ENCODE measurements at regions of chr13 and their contacts with region 1.

Region 1: DNA sequence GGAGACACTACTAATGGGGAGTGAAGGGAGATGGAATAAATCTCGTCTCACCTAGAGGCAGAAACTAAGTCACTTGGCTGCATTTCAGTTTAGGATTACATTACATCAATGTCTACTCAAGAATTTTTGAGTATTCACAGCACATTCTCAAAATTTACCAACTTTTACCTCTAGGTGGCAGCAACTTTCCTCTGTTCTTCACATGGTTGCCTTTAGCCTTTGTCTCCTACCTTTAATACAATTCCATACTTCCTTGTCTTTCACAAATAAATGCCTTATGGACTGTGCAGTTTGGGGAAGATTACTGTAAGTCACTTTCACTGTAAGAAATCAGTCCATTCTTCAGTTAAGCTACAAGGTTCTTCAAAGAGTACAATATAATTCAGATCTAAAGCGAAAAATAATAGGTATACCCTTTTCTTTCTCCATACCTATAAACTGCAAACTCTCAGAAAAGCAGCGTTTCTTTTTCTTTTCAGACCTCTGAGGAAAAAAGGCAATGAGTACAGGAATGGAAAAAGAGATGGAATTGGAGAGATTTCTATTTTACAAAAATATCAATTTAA is 379.4 kb downstream of the KLF12 start:
- DNase-seq: peak in 1 of 2 donors; percentile 51
- ATAC-seq: peak in 5 of 8 donors; percentile 52 to 78 (median 62)
- H3K4me3 ChIP-seq: no peak overlapping the region
- H3K27ac ChIP-seq: no peak overlapping the region
- H3K4me1 ChIP-seq: peaks cover 0 to 10% (median 0%) of the 10 kb centered on the region in 9 donors
- H3K27me3 ChIP-seq: no peaks in the 10 kb centered on the region
- CTCF ChIP-seq: peak; percentile 56 to 84 (median 74)

Region 2: DNA sequence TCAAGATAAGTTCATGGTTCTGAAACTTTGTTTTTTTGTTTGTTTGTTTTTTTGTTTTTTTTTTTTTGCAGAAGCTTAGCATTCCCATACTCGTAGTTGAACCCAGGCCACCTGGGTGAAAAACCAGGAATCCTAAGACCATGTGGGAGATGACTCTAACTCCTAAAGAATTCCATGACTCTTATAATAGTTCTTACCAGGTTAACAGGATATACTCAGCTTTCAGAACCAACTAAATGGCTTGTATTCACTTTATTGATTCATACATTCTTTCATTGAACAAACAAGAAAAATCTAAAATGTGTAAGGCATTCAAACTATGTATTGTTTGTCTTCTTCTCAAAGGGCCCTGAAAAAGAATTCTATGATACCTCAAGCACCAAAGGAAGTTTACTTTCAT is 736.5 kb before region 1 on chr13:
- intact Hi-C with region 1: no loop called
- DNase-seq: no peak
- ATAC-seq: no peak
- H3K4me3 ChIP-seq: no peak overlapping the region
- H3K27ac ChIP-seq: no peak overlapping the region
- H3K4me1 ChIP-seq: no peaks in the 10 kb centered on the region
- H3K27me3 ChIP-seq: no peaks in the 10 kb centered on the region
- CTCF ChIP-seq: no peak

Region 3: DNA sequence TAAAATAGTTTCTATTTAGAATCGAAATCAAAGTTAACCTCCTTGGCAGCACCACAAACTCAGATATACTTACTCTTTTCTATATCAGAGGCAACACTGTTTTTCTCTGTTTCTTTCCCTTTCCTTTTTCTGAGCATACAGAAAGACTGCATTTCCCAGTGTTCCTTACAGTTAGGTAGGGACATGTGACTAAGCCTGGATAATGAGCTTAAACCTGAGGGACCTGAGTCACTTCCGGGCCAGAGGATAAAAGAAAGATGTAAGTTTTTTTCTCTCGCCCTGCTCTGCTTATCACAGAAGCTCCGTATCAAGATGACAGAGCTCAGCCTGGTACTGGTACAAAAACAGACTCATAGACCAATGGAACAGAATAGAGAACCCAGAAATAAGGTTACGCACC is 152.5 kb before region 1 on chr13:
- intact Hi-C with region 1: no loop called
- DNase-seq: no peak
- ATAC-seq: no peak
- H3K4me3 ChIP-seq: no peak overlapping the region
- H3K27ac ChIP-seq: no peak overlapping the region
- H3K4me1 ChIP-seq: no peaks in the 10 kb centered on the region
- H3K27me3 ChIP-seq: no peaks in the 10 kb centered on the region
- CTCF ChIP-seq: no peak

Region 4: DNA sequence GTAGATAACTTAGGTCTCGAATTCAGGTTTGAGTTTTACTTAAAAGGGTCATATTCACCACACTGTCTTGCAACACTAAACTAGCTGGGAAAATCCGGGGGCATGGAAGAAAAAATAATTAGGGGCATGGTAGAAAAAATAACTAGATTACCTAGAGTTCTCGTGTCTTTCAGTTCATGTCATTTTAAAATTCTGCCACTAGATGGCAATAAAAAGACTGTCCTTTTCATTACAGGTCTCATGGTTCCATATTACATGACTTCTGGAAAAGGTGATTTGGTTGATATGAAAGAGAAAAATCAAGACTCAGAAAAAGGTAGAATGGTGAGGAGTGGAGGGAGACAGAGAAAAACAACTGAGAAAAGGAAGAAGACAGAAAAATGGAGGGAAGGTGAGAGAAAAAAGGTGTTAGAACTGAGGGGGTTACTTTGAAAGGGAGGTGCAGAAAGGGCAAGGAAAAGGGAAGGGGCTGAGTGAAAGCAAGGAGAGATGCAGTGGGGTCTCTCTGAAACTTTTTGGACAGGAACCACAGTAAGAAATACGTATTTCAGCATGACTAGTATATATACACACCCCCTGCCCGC is 80.4 kb after region 1 on chr13:
- intact Hi-C with region 1: loop called in 2 of 10 experiments (anchors 5 to 10 kb)
- DNase-seq: no peak
- ATAC-seq: peak in 5 of 8 donors; percentile 35 to 58 (median 50)
- H3K4me3 ChIP-seq: no peak overlapping the region
- H3K27ac ChIP-seq: no peak overlapping the region
- H3K4me1 ChIP-seq: peaks cover 0 to 30% (median 8%) of the 10 kb centered on the region in 9 donors
- H3K27me3 ChIP-seq: no peaks in the 10 kb centered on the region
- CTCF ChIP-seq: peak; percentile 51 to 83 (median 71)

Region 5: GRCh38 chr13:75258159-75258782 is 1503.5 kb after region 1 on chr13:
- intact Hi-C with region 1: loop called in 1 of 10 experiments (anchors 5 kb)
- DNase-seq: no peak
- ATAC-seq: peak in 2 of 8 donors; percentile 50 to 56
- H3K4me3 ChIP-seq: no peak overlapping the region
- H3K27ac ChIP-seq: no peak overlapping the region
- H3K4me1 ChIP-seq: no peaks in the 10 kb centered on the region
- H3K27me3 ChIP-seq: no peaks in the 10 kb centered on the region
- CTCF ChIP-seq: peak; percentile 25 to 81 (median 67)